ENCODE measurements at regions of chr5 and their contacts with region 1.

Region 1: DNA sequence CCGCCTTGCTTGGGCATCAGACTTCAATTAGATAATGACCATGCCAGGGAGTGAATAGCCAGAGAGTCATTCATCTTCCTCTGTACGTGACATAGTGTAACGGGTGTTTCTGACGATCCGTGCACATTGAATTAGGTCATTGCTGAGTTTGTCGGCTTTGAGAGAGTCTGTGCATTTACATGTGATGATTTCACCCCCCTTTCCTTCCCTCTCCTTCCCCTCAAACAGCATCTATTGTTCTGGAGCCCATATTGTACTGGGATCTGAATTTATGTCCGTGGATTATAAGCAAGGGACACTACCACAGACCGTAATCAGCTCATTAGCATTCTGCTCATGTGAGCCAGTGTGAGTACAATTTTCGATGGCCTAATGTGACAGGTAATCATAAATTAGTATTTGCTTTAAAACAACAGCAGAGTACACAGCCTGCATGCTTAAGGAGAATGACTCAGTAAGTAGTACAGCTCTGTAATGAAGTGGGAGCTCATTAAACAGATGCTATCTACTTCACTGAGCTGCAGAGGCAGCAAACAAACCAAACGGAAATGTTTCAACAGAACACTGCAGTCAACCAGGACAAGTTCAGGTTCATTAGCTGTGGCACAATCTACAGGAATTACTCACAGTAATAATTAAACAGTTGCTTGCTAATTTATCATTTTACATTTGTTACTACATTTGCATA is 302.1 kb downstream of the CSNK1G3 start:
- DNase-seq: no peak
- H3K4me3 ChIP-seq: no peak overlapping the region
- H3K27ac ChIP-seq: no peak overlapping the region
- H3K4me1 ChIP-seq: peaks cover 10 to 23% (median 13%) of the 10 kb centered on the region in 4 donors
- H3K27me3 ChIP-seq: no peaks in the 10 kb centered on the region
- CTCF ChIP-seq: no peak
- EP300 ChIP-seq: no peak
- POLR2A ChIP-seq: no peak

Region 2: DNA sequence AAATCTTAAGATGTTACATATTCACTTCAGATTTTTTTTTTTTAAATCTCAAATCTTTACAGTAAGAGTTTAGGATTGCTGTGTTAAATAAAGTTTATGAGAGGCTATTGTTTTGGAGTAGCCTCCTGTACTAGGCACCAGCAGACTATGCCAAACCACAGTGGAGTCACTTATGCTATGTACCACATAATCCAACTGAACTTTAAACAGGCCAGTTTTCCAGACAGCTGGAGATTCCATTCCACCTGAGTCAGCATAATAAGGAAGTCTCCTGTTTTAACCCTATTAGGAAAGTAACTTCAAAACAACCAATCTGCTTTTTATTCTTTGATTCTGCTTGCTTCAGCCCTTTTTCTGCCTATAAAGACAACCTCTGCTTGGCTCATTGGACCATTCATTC is 96.9 kb before region 1 on chr5:
- in situ Hi-C with region 1: no loop called
- intact Hi-C with region 1: no loop called
- DNase-seq: no peak
- H3K4me3 ChIP-seq: no peak overlapping the region
- H3K27ac ChIP-seq: no peak overlapping the region
- H3K4me1 ChIP-seq: peaks cover 0 to 3% (median 0%) of the 10 kb centered on the region in 4 donors
- H3K27me3 ChIP-seq: no peaks in the 10 kb centered on the region
- CTCF ChIP-seq: no peak
- EP300 ChIP-seq: no peak
- POLR2A ChIP-seq: no peak

Region 3: DNA sequence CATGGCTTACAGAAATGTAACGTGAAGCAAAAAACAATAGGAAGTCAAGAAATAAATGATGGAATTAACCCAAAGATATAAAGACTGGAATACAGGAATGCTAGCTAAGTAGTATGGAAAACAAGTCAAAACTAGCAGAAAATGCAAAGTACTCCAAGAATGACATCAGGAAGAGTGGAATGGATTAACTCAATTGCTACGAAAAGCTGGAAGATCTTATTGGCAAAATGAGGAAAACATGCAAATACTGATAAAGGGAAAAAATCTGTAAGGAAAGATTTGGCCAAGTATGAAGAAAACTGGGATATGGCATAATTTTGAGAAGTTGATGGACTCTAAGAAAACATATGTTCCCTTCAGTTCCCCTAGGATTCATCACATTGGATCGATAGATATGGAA is 1256.9 kb after region 1 on chr5:
- in situ Hi-C with region 1: no loop called
- intact Hi-C with region 1: loop called (anchors 5 kb)
- DNase-seq: no peak
- H3K4me3 ChIP-seq: no peak overlapping the region
- H3K27ac ChIP-seq: no peak overlapping the region
- H3K4me1 ChIP-seq: no peaks in the 10 kb centered on the region
- H3K27me3 ChIP-seq: no peaks in the 10 kb centered on the region
- CTCF ChIP-seq: no peak
- EP300 ChIP-seq: no peak
- POLR2A ChIP-seq: no peak

Measured in transverse colon (tissue), 4 donors.